ENCODE measurements at regions of chr21 and their contacts with region 1.

Region 1: GRCh38 chr21:46323227-46324128 is at the start of gene C21orf58:
- DNase-seq: peak; percentile 95 to 99 (median 98)
- ATAC-seq: peak; percentile 81
- H3K4me3 ChIP-seq: peak within 1 kb of the TSS; percentile 96
- H3K4me3 Mint-ChIP-seq: peak within 1 kb of the TSS; percentile 96
- H3K27ac ChIP-seq: peak within 1 kb of the TSS; percentile 96 to 100
- H3K27ac Mint-ChIP-seq: peak within 1 kb of the TSS; percentile 99
- H3K4me1 ChIP-seq: peaks cover 28% of the 10 kb centered on the region
- H3K4me1 Mint-ChIP-seq: peaks cover 39% of the 10 kb centered on the region
- H3K27me3 ChIP-seq: no peaks in the 10 kb centered on the region
- H3K27me3 Mint-ChIP-seq: no peaks in the 10 kb centered on the region
- CTCF ChIP-seq: no peak
- total RNA-seq, gene C21orf58: 2.0 to 2.8 TPM

Region 2: DNA sequence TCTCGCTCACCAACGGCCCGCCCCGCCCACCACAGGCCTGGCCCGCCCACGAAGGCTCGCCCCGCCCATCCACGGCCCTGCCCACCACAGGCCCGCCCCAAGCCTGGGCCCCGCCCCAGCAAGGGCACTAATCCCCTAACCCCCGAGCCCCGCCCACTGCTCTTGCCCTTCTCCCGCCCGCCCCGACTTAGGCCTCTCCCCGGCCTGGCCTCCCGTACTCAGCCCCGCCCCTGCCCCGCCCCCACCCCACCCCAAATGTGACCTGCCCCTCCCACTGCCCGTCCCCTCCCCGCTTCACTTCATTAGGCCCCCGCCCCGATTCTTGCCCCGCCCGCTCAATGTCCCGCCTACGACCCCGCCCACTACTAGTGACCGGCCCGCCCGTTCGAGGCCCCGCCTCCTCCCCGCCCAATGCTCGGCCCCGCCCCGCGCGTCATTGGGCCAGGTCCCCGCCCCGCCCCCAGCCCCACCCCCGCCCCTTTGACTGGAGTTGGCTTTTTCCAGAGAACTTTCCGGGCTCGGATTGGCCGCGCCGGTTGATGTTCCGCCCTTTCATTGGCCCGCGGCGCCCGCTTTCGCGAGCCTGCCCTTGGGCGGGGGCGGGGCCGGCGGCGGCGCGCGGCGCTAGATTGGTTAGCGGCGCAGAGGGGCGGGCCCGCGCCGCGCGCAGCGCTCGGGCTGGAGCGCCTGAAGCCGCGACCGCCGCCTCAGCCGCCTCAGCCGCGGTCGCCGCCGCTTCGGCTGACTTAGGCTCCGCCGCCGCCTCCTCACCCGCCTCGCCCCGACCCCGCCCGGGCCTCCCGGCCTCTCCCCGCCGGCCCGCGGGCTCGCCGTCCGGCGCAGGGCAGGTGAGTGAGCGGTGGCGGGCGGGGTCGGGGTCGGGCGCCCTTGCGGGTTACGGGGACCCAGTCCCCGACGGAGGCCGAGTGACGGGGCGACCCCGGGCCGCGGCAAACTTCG is 680.2 kb before region 1 on chr21 and contains the start of gene PCBP3:
- CTCF ChIA-PET with region 1: no interaction called
- POLR2A ChIA-PET with region 1: no interaction called
- intact Hi-C with region 1: loop called in 1 of 2 experiments (anchors 5 kb)
- DNase-seq: peak; percentile 89 to 99 (median 96)
- ATAC-seq: peak; percentile 78
- H3K4me3 ChIP-seq: peak within 1 kb of the TSS; percentile 24
- H3K4me3 Mint-ChIP-seq: peak within 1 kb of the TSS; percentile 77
- H3K27ac ChIP-seq: no peak within 1 kb of the TSS
- H3K27ac Mint-ChIP-seq: peak within 1 kb of the TSS; percentile 97
- H3K4me1 ChIP-seq: peaks cover 41% of the 10 kb centered on the region
- H3K4me1 Mint-ChIP-seq: peaks cover 53% of the 10 kb centered on the region
- H3K27me3 ChIP-seq: peaks cover 14 to 17% of the 10 kb centered on the region in 2 experiments
- H3K27me3 Mint-ChIP-seq: peaks cover 25% of the 10 kb centered on the region
- CTCF ChIP-seq: no peak
- total RNA-seq, gene PCBP3: 3.4 to 3.8 TPM

Region 3: DNA sequence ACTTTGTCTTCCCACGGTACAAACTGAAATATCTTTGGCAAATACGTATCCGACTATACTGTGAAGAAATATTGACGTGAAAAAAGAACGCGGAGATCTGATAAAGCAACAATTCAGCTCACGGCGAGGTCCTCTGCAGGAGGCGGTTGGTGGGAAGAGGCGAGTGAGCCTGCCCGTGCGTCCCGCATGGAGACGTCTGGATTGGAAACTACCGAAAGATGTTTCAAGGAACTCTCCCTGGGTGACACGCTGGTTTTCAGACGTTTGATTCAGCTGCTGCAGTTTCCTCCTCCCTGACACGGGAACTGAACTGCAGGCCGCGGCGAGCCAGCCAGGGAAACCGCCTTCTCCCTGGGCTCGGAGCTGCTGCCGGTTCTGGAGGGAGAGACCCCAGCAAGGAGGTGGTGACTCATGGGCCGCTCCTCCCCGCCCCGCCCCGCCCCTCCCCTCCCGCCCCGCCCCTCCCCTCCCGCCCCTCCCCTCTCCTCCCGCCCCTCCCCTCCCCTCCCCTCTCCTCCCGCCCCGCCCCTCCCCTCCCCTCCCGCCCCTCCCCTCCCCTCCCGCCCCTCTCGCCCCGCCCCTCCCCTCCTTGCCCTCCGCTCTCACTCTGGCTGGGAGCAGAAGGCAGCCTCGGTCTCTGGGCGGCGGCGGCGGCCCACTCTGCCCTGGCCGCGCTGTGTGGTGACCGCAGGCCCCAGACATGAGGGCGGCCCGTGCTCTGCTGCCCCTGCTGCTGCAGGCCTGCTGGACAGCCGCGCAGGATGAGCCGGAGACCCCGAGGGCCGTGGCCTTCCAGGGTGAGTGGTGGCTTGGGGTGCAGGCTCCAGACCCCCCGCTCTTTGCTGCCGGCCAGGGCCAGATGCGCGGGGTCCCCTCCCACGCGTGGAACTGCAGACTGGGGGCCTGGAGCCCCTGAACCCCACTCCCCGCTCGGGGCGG is 342.1 kb before region 1 on chr21 and contains the start of gene COL6A1:
- CTCF ChIA-PET with region 1: no interaction called
- POLR2A ChIA-PET with region 1: no interaction called
- intact Hi-C with region 1: loop called in 1 of 2 experiments (anchors 2 kb)
- DNase-seq: peak; percentile 36 to 85 (median 54)
- ATAC-seq: peak; percentile 79
- H3K4me3 ChIP-seq: peak within 1 kb of the TSS; percentile 59
- H3K4me3 Mint-ChIP-seq: peak within 1 kb of the TSS; percentile 76
- H3K27ac ChIP-seq: no peak within 1 kb of the TSS
- H3K27ac Mint-ChIP-seq: no peak within 1 kb of the TSS
- H3K4me1 ChIP-seq: peaks cover 32% of the 10 kb centered on the region
- H3K4me1 Mint-ChIP-seq: peaks cover 5% of the 10 kb centered on the region
- H3K27me3 ChIP-seq: peaks cover 5 to 6% of the 10 kb centered on the region in 2 experiments
- H3K27me3 Mint-ChIP-seq: peaks cover 6% of the 10 kb centered on the region
- CTCF ChIP-seq: no peak
- total RNA-seq, gene COL6A1: 8.0 to 8.5 TPM

Region 4: DNA sequence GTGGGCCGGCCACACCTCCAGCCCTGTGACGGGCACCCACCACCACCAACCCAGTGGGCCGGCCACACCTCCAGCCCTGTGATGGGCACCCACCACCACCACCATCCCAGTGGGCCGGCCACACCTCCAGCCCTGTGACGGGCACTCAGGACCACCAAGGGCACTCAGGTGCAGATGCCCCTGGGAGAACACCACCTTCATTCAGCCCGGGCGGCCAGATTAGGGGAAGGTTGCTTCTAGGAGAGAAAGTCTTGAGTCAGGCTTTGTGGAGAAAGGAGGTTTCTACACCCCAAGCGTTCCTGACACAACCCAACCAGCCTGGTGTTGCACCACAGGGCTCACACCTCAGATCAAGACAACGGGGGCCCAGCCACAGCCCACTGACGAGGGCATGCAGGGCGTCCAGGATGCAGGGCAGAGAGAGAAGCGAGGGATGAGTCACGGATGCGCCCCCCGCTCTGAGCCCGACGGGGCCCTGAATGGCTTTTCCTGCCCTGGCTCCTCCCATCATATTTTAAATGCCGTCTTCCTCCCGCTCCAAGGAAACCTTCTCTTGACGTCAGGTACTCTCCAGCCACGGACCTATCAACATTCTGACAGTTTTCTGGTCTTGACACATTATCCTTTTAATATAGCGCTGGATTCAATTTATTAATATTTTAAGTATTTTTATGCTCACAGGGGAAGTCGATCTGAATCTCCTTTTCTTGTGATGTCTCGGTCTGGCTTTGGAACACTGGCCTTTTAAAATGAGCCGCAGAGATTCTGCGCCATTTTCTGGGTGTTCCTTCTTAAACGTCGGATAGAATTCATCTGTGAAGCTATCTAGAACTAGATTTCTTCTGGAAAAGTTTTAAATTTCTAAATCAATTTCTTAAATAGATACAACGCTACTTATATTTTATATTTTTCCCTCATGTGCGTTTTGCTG is 138.6 kb before region 1 on chr21:
- CTCF ChIA-PET with region 1: no interaction called
- POLR2A ChIA-PET with region 1: no interaction called
- intact Hi-C with region 1: loop called in 1 of 2 experiments (anchors 5 kb)
- DNase-seq: peak; percentile 19 to 82 (median 53)
- ATAC-seq: peak; percentile 75
- H3K4me3 ChIP-seq: peak overlapping the region; percentile 64
- H3K4me3 Mint-ChIP-seq: peak overlapping the region; percentile 80
- H3K27ac ChIP-seq: peak overlapping the region; percentile 59 to 85
- H3K27ac Mint-ChIP-seq: peak overlapping the region; percentile 31
- H3K4me1 ChIP-seq: peaks cover 25% of the 10 kb centered on the region
- H3K4me1 Mint-ChIP-seq: peaks cover 11% of the 10 kb centered on the region
- H3K27me3 ChIP-seq: peaks cover 0 to 3% of the 10 kb centered on the region in 2 experiments
- H3K27me3 Mint-ChIP-seq: no peaks in the 10 kb centered on the region
- CTCF ChIP-seq: no peak

Region 5: DNA sequence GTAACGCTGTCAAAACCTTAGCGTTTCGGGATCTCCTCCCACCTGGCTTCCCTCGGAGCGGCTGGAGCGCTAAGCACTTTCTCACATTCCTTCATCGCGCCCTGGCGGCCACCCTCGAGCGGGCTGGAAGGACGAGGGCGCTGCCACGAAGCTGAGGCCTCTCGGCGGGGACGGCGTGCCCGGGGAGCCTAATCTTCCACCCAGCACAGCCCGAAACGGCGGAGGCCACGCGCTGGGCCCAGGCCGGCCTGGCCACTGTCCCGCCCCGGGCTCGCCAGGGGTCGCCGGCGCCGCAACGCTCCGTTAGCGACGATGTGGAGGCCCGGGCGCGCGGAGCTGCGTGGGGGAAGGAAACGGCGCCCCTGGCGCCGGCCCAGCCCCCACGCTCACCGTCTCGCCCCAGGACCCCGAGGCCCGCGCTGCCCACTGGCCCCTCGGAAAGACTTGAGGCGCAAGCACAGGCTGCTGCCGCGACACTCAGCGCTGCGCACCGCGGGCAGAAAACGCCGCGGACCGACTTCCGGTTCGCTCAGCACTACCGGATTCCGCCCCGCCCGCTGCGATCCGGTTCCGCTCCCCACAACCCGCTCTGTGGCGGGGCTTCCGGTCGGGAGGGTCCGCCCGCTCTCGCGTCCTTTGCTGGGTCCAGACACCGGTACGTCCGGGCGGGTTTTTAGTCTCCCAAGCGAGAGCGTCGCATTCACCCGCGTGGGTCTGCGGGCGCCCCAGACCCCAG is 37.5 kb before region 1 on chr21 and contains the start of gene YBEY:
- CTCF ChIA-PET with region 1: interaction called, 6 read pairs
- POLR2A ChIA-PET with region 1: no interaction called
- intact Hi-C with region 1: loop called (anchors 1 to 5 kb)
- DNase-seq: peak; percentile 68 to 92 (median 82)
- ATAC-seq: peak; percentile 80
- H3K4me3 ChIP-seq: peak within 1 kb of the TSS; percentile 84
- H3K4me3 Mint-ChIP-seq: peak within 1 kb of the TSS; percentile 98
- H3K27ac ChIP-seq: peak within 1 kb of the TSS; percentile 72 to 84
- H3K27ac Mint-ChIP-seq: peak within 1 kb of the TSS; percentile 86
- H3K4me1 ChIP-seq: peaks cover 49% of the 10 kb centered on the region
- H3K4me1 Mint-ChIP-seq: peaks cover 54% of the 10 kb centered on the region
- H3K27me3 ChIP-seq: no peaks in the 10 kb centered on the region
- H3K27me3 Mint-ChIP-seq: no peaks in the 10 kb centered on the region
- CTCF ChIP-seq: peak; percentile 41
- total RNA-seq, gene YBEY: 10.6 to 14.8 TPM